ENCODE measurements at regions of chr10 and their contacts with region 1.

Region 1: GRCh38 chr10:96374985-96375830 is 16.4 kb upstream of the OPALIN start:
- DNase-seq: peak; percentile 84 to 94 (median 90)
- H3K4me3 ChIP-seq: peak overlapping the region; percentile 44 to 79 (median 67)
- H3K27ac ChIP-seq: peak overlapping the region in 58 of 59 donors; percentile 51 to 90 (median 77)
- H3K27me3 ChIP-seq: no peaks in the 10 kb centered on the region
- CTCF ChIP-seq: peak; percentile 78 to 100 (median 98)

Region 2: DNA sequence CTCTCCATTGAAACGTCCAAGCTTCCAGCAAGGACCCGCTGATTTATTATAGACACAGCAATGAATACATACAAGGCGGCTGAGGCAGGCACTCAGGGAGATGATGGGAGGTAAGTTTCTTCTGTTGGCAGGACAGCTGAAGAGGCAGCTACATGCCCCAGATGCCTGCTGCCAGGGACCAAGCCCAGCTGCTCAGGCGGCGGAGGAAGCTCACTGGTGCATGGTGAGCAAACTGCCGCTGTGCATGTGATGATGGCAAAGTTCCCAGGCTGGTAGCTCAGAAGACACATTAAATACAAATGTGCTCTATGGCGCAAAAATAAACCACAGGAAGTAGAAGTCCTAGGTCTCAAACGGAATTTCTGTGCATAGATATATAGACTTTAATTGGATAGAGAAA is 68.7 kb before region 1 on chr10:
- intact Hi-C with region 1: no loop called
- DNase-seq: peak; percentile 23 to 72 (median 58)
- H3K4me3 ChIP-seq: peak overlapping the region in 2 of 59 donors; percentile 7 to 9
- H3K27ac ChIP-seq: no peak overlapping the region
- H3K27me3 ChIP-seq: peaks cover 0 to 19% (median 4%) of the 10 kb centered on the region in 45 donors
- CTCF ChIP-seq: no peak

Region 3: GRCh38 chr10:96334616-96335526 is 40.3 kb before region 1 on chr10:
- intact Hi-C with region 1: loop called in 1 of 2 experiments (anchors 2 kb)
- DNase-seq: peak in 2 of 10 donors; percentile 23 to 25
- H3K4me3 ChIP-seq: no peak overlapping the region
- H3K27ac ChIP-seq: peak overlapping the region in 39 of 59 donors; percentile 2 to 96 (median 50)
- H3K27me3 ChIP-seq: peaks cover 0 to 7% (median 0%) of the 10 kb centered on the region in 45 donors
- CTCF ChIP-seq: peak; percentile 43 to 90 (median 77)

Region 4: DNA sequence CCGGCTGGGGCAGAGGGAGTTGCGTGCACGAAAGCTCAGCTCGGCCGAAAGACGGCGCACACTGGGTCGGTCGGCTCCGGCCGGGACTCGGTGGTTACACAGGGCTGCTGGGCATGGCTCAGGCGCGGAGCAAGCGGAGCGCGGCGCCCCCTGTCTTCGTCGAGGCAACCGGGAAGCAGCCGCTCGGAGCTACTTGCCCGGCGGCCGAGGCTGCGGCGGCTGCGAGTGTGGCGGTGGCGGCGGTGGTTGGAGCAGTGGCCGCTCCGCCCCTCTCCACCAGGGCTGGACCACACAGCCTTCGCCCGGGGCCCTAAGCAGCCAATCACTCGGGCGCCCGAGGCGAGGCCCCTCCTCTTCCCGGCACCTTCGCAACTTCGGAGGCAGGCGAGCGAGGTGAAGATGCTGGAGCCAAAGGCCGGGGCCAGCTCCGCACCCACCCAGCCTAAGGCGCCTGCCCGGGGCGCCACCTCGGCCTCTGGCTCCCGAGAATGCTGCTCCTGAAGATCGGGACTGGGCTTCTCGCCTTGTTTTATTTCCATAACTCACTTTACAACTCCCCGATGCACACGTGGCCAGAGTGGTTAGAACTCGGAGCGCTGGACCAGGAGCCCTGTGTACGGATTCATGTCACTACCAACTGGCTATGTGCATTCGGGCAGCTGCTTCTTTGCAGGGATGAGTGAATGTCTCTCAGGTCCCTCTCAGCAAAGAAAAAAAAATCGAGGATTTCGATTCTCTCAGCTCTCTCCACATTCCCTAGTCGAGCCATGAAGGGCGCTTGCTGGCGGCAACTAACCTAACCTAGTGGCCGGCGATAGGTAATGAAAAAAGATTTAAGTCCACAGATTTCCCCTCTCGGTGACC is 138.7 kb after region 1 on chr10 and contains the start of gene TLL2:
- intact Hi-C with region 1: loop called in 1 of 2 experiments (anchors 5 kb)
- DNase-seq: peak; percentile 81 to 93 (median 88)
- H3K4me3 ChIP-seq: peak within 1 kb of the TSS; percentile 39 to 83 (median 68)
- H3K27ac ChIP-seq: peak within 1 kb of the TSS in 26 of 59 donors; percentile 11 to 81 (median 48)
- H3K27me3 ChIP-seq: no peaks in the 10 kb centered on the region
- CTCF ChIP-seq: peak; percentile 65 to 96 (median 86)
- total RNA-seq, gene TLL2: 1.8 to 14.6 (median 4.2) TPM

Region 5: DNA sequence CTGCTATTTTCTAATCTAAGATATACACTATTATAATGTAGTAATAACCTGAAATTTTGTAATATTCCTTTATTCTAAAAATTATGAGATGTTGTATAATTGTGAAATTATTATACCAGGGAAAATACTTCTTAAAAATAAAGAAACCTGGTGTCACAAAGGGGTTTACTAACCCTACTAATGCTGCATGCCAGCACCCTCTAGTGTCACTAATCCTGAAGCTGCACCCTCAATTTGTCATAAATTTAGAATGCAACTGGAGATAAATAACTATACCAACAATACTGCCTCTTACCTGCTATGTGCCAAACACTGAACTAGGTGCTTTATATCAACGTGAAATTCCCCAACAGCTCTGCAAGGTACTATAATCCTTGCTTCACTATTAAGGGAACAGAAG is 180.8 kb after region 1 on chr10:
- intact Hi-C with region 1: loop called in 1 of 2 experiments (anchors 5 kb)
- DNase-seq: peak in 1 of 10 donors; percentile 18
- H3K4me3 ChIP-seq: no peak overlapping the region
- H3K27ac ChIP-seq: no peak overlapping the region
- H3K27me3 ChIP-seq: no peaks in the 10 kb centered on the region
- CTCF ChIP-seq: peak; percentile 15 to 84 (median 58)

Region 6: DNA sequence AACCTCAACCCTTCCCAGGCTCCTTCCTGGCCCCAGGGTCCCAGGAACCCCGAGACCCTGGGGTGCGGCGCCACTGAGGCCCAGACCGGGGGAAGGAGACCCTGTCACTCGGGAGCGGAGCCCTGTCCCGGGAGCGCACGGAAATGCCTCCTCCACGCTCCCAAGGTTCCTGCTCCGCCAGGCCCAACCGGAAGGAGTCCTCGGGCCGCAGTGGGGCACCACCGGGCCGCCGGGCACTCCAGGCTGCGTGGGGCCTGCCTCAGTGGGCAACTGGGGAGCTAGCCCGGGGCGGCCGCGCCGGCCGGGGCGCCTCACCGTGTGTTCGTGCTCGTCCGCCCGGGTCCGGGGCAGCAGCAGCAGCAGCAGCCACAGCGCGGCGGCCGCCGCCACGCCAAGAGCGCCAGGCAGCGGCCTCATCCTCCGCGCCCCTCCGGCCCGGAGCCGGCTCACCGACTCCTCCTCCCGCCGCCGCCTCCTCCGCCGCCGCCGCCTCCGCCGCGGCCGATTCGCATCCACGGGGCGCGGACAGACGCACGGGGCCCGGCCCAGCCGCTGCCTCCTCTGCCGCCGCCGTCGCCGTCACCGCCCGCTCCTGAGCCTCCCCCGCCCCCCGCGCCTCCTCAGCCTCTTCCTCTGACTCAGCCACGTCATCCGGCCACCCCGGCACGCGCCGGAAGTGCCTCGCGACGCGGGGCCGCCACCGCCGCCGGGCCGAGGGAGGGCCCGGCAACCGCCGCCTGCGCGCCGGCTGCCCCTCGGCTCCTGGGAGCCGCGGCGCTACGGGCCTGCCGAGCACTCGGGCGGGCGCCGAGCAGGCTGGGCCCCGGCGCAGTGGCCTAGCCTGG is 211.4 kb after region 1 on chr10 and contains the start of gene TM9SF3:
- intact Hi-C with region 1: loop called in 1 of 2 experiments (anchors 10 kb)
- DNase-seq: peak; percentile 78 to 94 (median 88)
- H3K4me3 ChIP-seq: peak within 1 kb of the TSS; percentile 62 to 99 (median 92)
- H3K27ac ChIP-seq: peak within 1 kb of the TSS; percentile 55 to 98 (median 94)
- H3K27me3 ChIP-seq: no peaks in the 10 kb centered on the region
- CTCF ChIP-seq: peak in 12 of 56 donors; percentile 4 to 26 (median 12)
- total RNA-seq, gene TM9SF3: 52.7 to 101 (median 73.9) TPM

Region 7: DNA sequence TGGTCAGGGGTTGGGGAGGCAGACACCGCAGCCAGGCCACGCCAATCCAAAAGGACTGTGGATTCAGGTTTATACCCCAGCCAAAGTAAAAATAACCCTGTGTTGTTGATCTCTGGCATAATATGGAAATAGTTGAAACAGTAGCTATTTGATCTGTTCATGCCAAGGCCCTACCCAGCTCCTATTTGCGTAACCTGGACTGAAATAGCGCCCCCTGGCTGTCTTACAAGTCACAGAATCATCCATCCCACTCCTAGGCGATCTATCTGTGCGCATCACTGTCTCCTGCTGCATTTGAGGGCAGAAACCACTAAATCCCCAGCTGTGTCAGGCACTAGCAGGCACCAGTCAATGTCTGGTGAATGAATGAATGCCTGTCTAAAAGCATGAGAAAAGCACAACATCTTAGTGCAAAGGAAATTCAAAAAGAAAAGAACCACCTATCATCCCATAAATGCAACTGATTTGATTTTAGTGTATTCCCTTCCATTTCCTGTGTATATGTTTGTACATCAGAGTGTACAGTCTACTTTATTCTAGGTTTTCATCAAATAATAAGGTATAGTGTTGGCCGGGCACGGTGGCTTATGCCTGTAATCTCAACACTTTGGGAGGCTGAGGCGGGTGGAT is 650.5 kb after region 1 on chr10:
- intact Hi-C with region 1: loop called (anchors 10 kb)
- DNase-seq: peak in 7 of 10 donors; percentile 28 to 79 (median 61)
- H3K4me3 ChIP-seq: no peak overlapping the region
- H3K27ac ChIP-seq: peak overlapping the region in 6 of 59 donors; percentile 4 to 60 (median 18)
- H3K27me3 ChIP-seq: no peaks in the 10 kb centered on the region
- CTCF ChIP-seq: peak; percentile 61 to 88 (median 77)

Region 8: GRCh38 chr10:97210543-97210961 is 835.3 kb after region 1 on chr10:
- intact Hi-C with region 1: loop called in 1 of 2 experiments (anchors 10 kb)
- DNase-seq: peak in 8 of 10 donors; percentile 40 to 83 (median 73)
- H3K4me3 ChIP-seq: no peak overlapping the region
- H3K27ac ChIP-seq: no peak overlapping the region
- H3K27me3 ChIP-seq: no peaks in the 10 kb centered on the region
- CTCF ChIP-seq: peak in 55 of 56 donors; percentile 85 to 100 (median 98)

Measured in dorsolateral prefrontal cortex (tissue), 120 donors.